Body of pancreas (tissue), 4 donors: ENCODE measurements at regions of chr9 and their contacts with region 1.

Region 1: GRCh38 chr9:122236681-122237080 is 7.9 kb upstream of the LHX6 start:
- DNase-seq: no peak
- ATAC-seq: no peak
- H3K4me3 ChIP-seq: no peak overlapping the region
- H3K27ac ChIP-seq: no peak overlapping the region
- H3K4me1 ChIP-seq: no peaks in the 10 kb centered on the region
- H3K27me3 ChIP-seq: no peaks in the 10 kb centered on the region
- CTCF ChIP-seq: no peak
- POLR2A ChIP-seq: no peak

Region 2: GRCh38 chr9:121963528-121963995 is 273.1 kb before region 1 on chr9:
- intact Hi-C with region 1: no loop called
- DNase-seq: no peak
- ATAC-seq: no peak
- H3K4me3 ChIP-seq: no peak overlapping the region
- H3K27ac ChIP-seq: no peak overlapping the region
- H3K4me1 ChIP-seq: no peaks in the 10 kb centered on the region
- H3K27me3 ChIP-seq: no peaks in the 10 kb centered on the region
- CTCF ChIP-seq: no peak
- POLR2A ChIP-seq: no peak

Region 3: DNA sequence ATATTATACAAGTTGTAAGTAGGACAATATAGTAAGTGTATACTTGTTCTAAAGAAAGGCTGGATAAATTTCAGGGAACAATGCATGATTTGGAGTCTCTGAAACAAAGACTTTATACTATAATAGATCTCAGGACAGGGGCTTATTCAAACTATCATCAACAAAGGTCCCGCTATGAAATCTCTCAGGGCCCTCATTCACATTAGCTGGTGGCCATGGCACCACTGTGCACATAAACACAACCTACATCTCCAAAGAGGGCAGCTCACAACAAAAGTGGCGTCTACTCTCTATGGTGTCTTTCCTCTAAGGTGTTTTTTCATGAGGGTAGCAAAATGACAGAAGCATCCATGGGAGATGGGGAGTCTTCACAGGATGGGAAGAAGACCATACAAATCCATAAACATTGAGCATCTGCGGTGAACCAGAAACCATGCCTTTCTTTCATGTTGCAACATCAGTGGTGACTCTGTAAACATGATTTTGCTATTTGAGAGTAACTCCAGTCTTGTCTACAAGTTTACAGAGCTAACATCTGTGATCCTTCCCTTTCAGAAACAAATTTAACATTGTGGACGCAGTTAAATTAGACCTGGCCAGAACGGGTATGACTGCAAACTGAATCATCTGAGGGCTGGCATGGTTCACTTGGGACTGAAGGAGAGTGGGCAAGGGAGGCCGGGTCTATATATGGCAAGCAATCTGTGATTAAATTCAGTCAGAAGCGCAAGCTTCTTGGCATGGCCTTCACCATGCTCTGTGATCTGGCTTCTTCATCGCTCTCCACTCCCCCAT is 149.1 kb before region 1 on chr9:
- intact Hi-C with region 1: no loop called
- DNase-seq: peak in 1 of 4 donors; percentile 41
- ATAC-seq: no peak
- H3K4me3 ChIP-seq: no peak overlapping the region
- H3K27ac ChIP-seq: peak overlapping the region; percentile 63 to 79 (median 78)
- H3K4me1 ChIP-seq: peaks cover 53% of the 10 kb centered on the region
- H3K27me3 ChIP-seq: no peaks in the 10 kb centered on the region
- CTCF ChIP-seq: no peak
- POLR2A ChIP-seq: no peak

Region 4: GRCh38 chr9:122179690-122180074 is 57.0 kb before region 1 on chr9:
- intact Hi-C with region 1: loop called (anchors 10 kb)
- DNase-seq: no peak
- ATAC-seq: no peak
- H3K4me3 ChIP-seq: no peak overlapping the region
- H3K27ac ChIP-seq: no peak overlapping the region
- H3K4me1 ChIP-seq: no peaks in the 10 kb centered on the region
- H3K27me3 ChIP-seq: no peaks in the 10 kb centered on the region
- CTCF ChIP-seq: no peak
- POLR2A ChIP-seq: no peak

Region 5: DNA sequence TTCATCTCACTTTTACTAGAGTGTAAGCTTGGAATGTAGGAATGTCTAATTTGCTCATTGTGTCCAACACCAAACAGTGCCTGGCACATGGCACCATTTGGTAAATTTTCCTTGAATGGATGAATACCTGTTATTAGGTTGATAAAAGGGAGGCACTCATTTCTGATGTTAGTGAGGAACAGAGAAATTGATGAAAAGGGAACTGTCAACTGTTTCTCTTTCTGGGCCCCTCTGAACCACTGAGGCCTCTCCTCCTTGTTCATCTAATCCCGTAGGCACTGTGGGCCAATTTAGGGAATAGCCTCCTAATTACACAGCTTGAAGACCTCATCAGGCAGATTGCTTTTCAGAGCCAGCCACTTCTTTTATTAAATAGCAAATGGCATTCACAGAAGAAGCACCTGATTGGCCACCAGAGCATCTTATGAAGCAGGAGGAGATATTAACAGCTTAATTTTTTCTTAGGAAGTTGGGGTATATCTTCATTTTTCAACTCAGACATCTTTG is 50.6 kb after region 1 on chr9:
- intact Hi-C with region 1: no loop called
- DNase-seq: no peak
- ATAC-seq: no peak
- H3K4me3 ChIP-seq: no peak overlapping the region
- H3K27ac ChIP-seq: no peak overlapping the region
- H3K4me1 ChIP-seq: peaks cover 4% of the 10 kb centered on the region
- H3K27me3 ChIP-seq: no peaks in the 10 kb centered on the region
- CTCF ChIP-seq: no peak
- POLR2A ChIP-seq: no peak

Region 6: GRCh38 chr9:122406070-122406890 is 169.6 kb after region 1 on chr9:
- intact Hi-C with region 1: no loop called
- DNase-seq: no peak
- ATAC-seq: no peak
- H3K4me3 ChIP-seq: peak overlapping the region in 1 of 2 donors; percentile 30
- H3K27ac ChIP-seq: no peak overlapping the region
- H3K4me1 ChIP-seq: no peaks in the 10 kb centered on the region
- H3K27me3 ChIP-seq: no peaks in the 10 kb centered on the region
- CTCF ChIP-seq: no peak
- POLR2A ChIP-seq: no peak